ENCODE measurements at regions of chrX and their contacts with region 1.

Region 1: DNA sequence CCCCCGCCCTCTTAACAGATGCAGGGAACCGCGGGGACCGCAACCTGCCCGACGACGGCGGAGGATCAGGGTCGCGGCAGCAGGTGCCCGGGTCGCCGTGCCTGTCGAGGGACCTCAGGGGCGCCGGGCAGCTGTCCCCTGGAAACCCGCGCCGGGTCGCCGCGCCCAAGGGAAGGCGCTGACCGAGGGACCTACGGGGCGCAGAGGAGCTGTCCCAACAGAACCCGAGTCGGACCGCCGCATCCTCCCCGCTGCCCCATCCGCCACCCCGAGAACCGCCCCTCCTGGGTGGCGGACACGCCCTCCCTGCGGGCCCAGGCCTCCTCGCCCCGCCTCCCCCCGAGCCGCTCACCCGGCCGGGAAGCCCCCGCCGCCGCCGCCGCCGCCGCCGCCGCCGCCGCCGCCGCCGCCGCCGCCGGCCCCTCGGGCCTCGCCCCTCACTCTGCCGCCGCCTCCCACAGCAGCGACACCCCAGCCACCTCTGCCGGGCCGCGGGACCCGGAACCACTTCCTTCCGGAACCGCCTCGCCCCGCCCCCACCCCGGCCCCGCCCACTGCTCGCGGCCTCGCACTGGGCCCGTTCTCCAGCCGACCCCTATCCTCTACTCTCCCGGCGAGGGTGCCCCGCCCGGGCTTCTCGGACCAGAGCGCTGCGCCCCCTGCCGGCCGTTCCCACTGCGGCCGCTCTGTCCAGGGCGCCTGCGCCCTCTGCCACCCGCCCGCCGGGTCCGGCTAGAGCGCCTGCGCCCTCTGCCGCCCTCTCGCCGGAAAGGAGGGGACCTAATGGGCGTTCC is at the start of gene BCLAF3:
- DNase-seq: peak; percentile 81
- H3K4me3 Mint-ChIP-seq: peak within 1 kb of the TSS; percentile 94
- H3K27ac Mint-ChIP-seq: peak within 1 kb of the TSS; percentile 89
- H3K4me1 Mint-ChIP-seq: peaks cover 17% of the 10 kb centered on the region
- H3K27me3 Mint-ChIP-seq: peaks cover 3% of the 10 kb centered on the region
- total RNA-seq, gene BCLAF3: 5.4 and 6.2 TPM in 2 replicates

Region 2: GRCh38 chrX:19372170-19372546 is 618.6 kb before region 1 on chrX:
- intact Hi-C with region 1: loop called (anchors 2 kb)
- DNase-seq: peak; percentile 34
- H3K4me3 Mint-ChIP-seq: peak overlapping the region; percentile 87
- H3K27ac Mint-ChIP-seq: peak overlapping the region; percentile 85
- H3K4me1 Mint-ChIP-seq: peaks cover 9% of the 10 kb centered on the region
- H3K27me3 Mint-ChIP-seq: peaks cover 2% of the 10 kb centered on the region

Region 3: GRCh38 chrX:19593690-19594089 is 397.1 kb before region 1 on chrX:
- intact Hi-C with region 1: loop called (anchors 10 kb)
- DNase-seq: no peak
- H3K4me3 Mint-ChIP-seq: no peak overlapping the region
- H3K27ac Mint-ChIP-seq: no peak overlapping the region
- H3K4me1 Mint-ChIP-seq: peaks cover 5% of the 10 kb centered on the region
- H3K27me3 Mint-ChIP-seq: no peaks in the 10 kb centered on the region

Region 4: GRCh38 chrX:19739683-19740082 is 251.1 kb before region 1 on chrX:
- intact Hi-C with region 1: loop called (anchors 10 kb)
- DNase-seq: no peak
- H3K4me3 Mint-ChIP-seq: no peak overlapping the region
- H3K27ac Mint-ChIP-seq: peak overlapping the region; percentile 83
- H3K4me1 Mint-ChIP-seq: peaks cover 54% of the 10 kb centered on the region
- H3K27me3 Mint-ChIP-seq: no peaks in the 10 kb centered on the region

Region 5: DNA sequence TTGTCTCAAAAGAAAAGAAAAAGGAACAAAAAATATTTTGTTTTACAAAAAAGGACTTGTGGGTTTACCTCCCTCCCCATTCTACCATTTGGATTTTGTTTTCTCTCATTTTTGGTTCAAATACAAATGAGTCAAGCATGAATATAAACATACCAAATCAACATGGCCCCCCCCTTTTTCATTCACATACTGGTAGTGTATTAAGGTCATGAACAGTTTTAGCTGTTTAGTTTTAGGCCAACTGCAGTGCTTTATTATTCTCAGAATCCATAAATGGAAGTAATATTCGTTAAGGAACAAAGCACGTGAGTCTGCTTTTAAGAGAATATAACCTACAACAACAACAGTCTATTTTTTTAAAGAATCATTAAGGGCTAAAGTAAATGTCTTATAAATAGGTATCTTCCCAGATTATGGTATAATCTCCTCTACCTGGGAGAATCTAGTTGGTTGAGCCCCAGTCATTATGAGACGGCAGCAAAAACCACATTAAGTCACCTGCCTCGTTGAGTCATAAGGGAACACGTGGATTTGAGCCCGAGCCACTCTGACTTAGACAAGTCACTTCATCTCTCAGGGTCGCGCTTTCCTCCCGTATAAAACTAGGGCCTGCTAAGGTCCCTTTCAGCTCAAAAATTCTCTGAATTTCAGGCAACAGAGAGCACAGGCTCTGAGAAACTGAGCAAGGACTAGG is 26.6 kb before region 1 on chrX:
- intact Hi-C with region 1: loop called (anchors 2 kb)
- DNase-seq: peak; percentile 13
- H3K4me3 Mint-ChIP-seq: no peak overlapping the region
- H3K27ac Mint-ChIP-seq: no peak overlapping the region
- H3K4me1 Mint-ChIP-seq: peaks cover 13% of the 10 kb centered on the region
- H3K27me3 Mint-ChIP-seq: no peaks in the 10 kb centered on the region

Region 6: DNA sequence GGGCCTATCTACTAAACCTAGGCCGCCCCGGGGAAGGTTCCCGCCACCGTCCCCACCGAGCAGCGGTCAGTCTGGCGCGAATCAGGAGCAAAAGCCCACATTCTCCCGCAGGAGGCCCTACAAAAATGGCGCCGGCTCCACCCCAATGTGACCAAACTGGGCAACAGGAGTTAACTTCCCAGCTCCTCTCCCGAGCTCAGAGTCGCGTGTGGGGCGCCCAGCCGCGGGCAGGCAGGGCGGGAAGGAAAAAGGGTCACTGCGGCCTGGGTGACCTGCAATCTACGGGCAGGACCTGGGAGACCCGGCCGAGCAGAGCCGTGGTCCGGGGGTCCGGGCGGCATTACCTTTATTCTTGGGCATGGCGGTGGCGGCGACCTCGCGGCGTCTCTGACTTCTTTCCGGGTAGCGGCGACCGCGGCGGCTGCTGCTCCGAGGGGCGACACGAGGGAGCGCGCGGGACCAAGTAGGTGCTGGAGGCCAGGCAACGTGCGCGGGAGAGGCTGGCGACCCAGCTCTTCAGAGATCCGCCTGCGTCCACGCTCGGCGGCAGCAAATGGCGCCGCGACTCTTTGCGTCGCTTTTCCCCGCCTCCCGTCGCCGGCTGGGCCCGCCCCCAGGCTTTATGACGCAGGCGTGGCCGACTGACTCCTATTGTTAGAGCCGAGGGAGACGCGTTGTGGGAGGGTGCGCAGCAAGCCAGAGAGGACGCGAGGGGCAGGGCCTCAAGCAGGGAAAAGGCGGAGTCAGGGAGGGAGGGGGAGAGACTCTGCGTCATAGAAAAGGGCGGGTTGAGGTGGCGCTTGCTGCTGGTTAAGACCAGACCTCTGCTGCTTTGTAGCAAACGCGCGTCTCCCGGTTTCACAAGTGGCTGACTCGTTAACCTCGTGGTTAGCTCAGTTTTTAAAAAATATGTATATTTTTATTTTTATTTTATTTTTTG is 150.8 kb after region 1 on chrX and contains the start of gene EIF1AX:
- intact Hi-C with region 1: loop called (anchors 1 kb)
- DNase-seq: peak; percentile 93
- H3K4me3 Mint-ChIP-seq: peak within 1 kb of the TSS; percentile 90
- H3K27ac Mint-ChIP-seq: peak within 1 kb of the TSS; percentile 84
- H3K4me1 Mint-ChIP-seq: peaks cover 29% of the 10 kb centered on the region
- H3K27me3 Mint-ChIP-seq: no peaks in the 10 kb centered on the region
- total RNA-seq, gene EIF1AX: 107 TPM in 2 replicates

Measured in activated T-helper 1 cell treated with anti-CD3 and anti-CD28 coated beads, Interleukin-12 subunit alpha, Interleukin-12 subunit beta, Interleukin-2, Interleukin-4 antibody, amounts not matched to agents 30 ng/mL and 10 ng/mL and 1 ng/mL, durations not matched to agents 14 hours and 24 hours and 36 hours (primary cell).